ENCODE measurements at regions of chr9 and their contacts with region 1.

Region 1: DNA sequence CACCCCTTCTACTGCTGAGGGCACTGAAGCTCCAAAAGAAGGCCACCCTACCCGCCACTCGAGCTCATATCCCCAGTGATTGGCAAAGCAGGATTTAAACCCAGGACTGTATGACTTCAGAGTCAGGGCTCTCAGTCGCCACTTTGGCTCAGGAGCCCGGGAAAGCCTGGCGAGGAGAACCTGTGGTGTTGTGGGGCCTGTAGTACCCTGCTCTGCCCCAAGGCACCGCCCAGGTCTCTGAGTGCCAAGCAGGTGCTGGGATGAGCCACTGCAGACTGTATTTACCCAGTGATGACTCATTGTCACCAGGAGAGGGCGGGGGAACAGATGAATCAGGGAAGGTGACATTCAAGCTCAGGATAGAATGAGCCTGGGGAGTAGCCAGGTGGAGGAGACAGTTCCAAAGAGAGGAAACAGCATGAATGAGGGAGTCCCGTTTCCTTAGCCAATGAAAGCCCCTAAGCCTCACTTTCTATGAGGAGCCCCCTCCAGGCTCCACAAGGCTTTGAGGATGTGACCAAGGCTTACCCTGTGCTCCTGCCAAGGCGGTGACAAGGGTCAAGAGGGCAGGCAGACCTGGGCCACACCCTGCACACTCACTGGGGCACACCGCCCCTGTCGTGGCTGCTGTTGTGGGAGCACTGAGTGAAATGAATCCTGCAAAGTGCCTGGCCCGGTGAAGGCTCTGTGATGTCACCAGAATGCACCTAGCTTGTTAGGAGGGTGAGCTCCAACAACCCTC is 17.8 kb upstream of the DPM2 start:
- DNase-seq: peak; percentile 83
- H3K4me3 Mint-ChIP-seq: peak overlapping the region; percentile 32
- H3K27ac Mint-ChIP-seq: peak overlapping the region; percentile 69
- H3K4me1 Mint-ChIP-seq: peaks cover 94% of the 10 kb centered on the region
- H3K27me3 Mint-ChIP-seq: no peaks in the 10 kb centered on the region

Region 2: GRCh38 chr9:127980706-127981558 is 25.5 kb after region 1 on chr9 and contains the start of gene EEIG1:
- CTCF ChIA-PET with region 1: interaction called, 159 read pairs
- DNase-seq: peak; percentile 98
- H3K4me3 Mint-ChIP-seq: peak within 1 kb of the TSS; percentile 94
- H3K27ac Mint-ChIP-seq: peak within 1 kb of the TSS; percentile 97
- H3K4me1 Mint-ChIP-seq: peaks cover 46% of the 10 kb centered on the region
- H3K27me3 Mint-ChIP-seq: no peaks in the 10 kb centered on the region

Region 3: GRCh38 chr9:128026773-128027541 is 71.5 kb after region 1 on chr9:
- CTCF ChIA-PET with region 1: interaction called, 247 read pairs
- DNase-seq: peak; percentile 61
- H3K4me3 Mint-ChIP-seq: peak overlapping the region; percentile 87
- H3K27ac Mint-ChIP-seq: peak overlapping the region; percentile 99
- H3K4me1 Mint-ChIP-seq: peaks cover 94% of the 10 kb centered on the region
- H3K27me3 Mint-ChIP-seq: peaks cover 7% of the 10 kb centered on the region

Measured in activated naive CD4-positive, alpha-beta T cell treated with anti-CD3 and anti-CD28 coated beads, Interleukin-2, amount 10 ng/mL, durations not matched to agents 7 days and 5 days (primary cell).